ENCODE measurements at regions of chr13 and their contacts with region 1.

Region 1: DNA sequence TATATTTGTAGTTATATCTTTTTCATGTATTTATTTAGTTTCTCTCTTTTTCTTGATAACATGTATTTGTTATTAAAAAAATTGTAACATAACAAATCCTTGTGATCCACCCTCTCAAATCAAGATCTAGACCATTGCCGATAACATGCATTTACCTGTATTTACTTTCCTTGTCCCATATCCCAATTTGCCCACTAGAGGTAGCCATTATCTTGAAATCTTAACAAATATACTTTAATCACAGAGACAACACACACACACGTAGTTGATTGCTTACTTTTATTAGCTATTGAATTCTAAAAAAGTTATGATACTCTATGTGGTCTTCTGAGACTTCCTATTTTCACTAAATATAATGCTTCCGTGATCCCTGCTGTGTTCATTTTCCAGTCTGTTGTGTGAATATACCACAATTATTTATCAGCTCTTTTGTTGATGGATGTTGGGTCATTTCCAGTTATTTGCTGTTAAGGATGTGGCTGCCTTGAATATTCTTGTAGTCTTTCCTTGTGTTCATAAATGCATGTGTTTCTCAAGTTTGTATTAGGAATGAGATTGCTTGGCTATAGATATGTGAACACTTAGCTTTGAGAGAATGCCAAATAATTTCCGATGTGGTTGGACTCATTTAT is 31.3 kb upstream of the ZMYM2 start:
- DNase-seq: peak in 3 of 10 donors; percentile 10 to 27 (median 19)
- ATAC-seq: peak; percentile 44 to 69
- H3K4me3 Mint-ChIP-seq: no peak overlapping the region
- H3K27ac Mint-ChIP-seq: no peak overlapping the region
- H3K4me1 Mint-ChIP-seq: peaks cover 0 to 3% (median 0%) of the 10 kb centered on the region in 4 donors
- H3K27me3 Mint-ChIP-seq: peaks cover 0 to 2% (median 0%) of the 10 kb centered on the region in 5 donors

Region 2: GRCh38 chr13:19860885-19861655 is 66.2 kb before region 1 on chr13:
- POLR2A ChIA-PET with region 1: no interaction called
- DNase-seq: no peak
- ATAC-seq: no peak
- H3K4me3 Mint-ChIP-seq: peak overlapping the region; percentile 89 to 98 (median 97)
- H3K27ac Mint-ChIP-seq: peak overlapping the region in 9 of 10 donors; percentile 38 to 97 (median 93)
- H3K4me1 Mint-ChIP-seq: peaks cover 15 to 50% (median 48%) of the 10 kb centered on the region in 4 donors
- H3K27me3 Mint-ChIP-seq: no peaks in the 10 kb centered on the region

Region 3: GRCh38 chr13:19882231-19882630 is 45.0 kb before region 1 on chr13:
- POLR2A ChIA-PET with region 1: interaction called, 10 read pairs
- DNase-seq: no peak
- ATAC-seq: no peak
- H3K4me3 Mint-ChIP-seq: no peak overlapping the region
- H3K27ac Mint-ChIP-seq: no peak overlapping the region
- H3K4me1 Mint-ChIP-seq: no peaks in the 10 kb centered on the region
- H3K27me3 Mint-ChIP-seq: peaks cover 0 to 4% (median 2%) of the 10 kb centered on the region in 5 donors

Region 4: DNA sequence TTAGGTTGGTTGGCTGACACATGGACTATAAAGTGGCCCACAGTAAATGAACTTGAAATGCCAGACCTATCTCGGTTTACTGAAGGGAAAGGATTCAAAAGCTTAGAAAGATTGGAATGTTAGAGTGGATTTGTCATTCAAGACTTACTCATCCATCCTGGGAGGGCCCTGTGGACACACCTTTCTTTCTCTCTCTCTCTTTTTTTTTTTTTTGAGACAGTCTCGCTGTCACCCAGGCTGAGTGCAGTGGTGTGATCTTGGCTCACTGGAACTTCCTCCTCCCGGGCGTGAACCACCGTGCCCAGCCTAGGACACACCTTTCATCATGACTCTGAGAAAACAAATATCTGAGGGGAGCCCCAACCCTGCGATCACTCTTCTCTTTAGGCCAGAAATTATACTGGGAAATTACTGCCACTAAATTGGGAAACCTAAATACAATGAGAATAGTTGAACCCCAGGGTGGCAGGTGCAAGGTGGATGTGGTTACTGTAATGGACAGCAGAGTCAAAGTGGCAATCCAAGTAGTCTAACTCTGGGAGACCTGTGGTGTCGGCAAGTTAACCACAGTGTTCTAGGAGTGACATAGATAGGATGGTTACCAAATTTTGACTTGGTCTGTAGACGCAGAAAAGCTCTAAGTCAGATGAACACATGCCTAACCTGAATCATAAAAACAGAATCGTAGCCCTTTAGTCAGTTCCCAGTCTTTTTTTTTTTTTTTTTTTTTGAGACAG is 16.7 kb before region 1 on chr13:
- POLR2A ChIA-PET with region 1: no interaction called
- DNase-seq: no peak
- ATAC-seq: no peak
- H3K4me3 Mint-ChIP-seq: no peak overlapping the region
- H3K27ac Mint-ChIP-seq: no peak overlapping the region
- H3K4me1 Mint-ChIP-seq: no peaks in the 10 kb centered on the region
- H3K27me3 Mint-ChIP-seq: peaks cover 0 to 5% (median 0%) of the 10 kb centered on the region in 5 donors

Measured in naive thymus-derived CD8-positive, alpha-beta T cell (primary cell).